ENCODE measurements at regions of chr6 and their contacts with region 1.

Region 1: DNA sequence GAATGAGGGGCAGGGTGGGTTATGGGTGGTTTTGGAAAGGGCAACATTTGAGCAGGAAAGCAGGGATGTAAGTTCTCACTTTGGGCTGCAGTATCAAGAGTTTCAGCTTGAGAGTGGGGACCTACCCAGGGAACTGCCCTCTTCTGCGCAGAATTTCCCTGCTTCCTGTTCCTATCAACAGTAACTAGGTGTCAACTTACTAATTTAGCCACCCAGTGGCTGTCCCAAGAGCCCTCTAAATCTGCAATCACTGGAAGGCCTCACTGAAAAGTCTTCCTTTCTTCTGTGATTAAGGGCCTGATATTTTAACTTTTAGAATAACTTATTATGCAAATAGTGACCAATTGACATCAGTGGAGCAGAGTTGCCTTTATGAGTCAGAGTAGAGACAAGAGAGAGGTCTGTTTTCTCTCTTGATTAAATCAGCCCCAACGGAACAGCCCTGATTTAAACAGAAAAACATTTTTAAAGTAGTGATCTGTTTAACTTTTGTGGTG is 118.2 kb upstream of the RIPOR2 start:
- DNase-seq: no peak
- H3K4me3 Mint-ChIP-seq: no peak overlapping the region
- H3K27ac Mint-ChIP-seq: no peak overlapping the region
- H3K4me1 Mint-ChIP-seq: peaks cover 86% of the 10 kb centered on the region
- H3K27me3 Mint-ChIP-seq: no peaks in the 10 kb centered on the region

Region 2: DNA sequence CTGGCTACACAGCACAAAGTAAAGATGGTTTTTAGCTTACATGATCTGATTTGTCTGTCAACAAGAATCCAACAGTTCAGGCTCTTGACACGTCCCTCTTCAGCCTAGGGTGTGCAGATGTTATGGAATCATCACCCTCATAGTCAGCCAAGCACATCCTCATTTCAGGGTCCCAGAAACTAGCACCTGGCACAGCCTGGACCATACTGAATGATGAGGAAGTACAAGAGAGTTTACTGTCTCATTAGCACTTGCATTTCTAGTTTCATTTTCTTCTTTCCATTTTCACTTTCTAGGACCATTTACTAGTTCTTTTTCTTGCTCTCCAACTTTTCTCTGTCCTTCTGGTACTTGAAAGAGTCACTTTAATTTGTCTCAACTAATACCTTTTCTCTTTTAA is 124.7 kb before region 1 on chr6:
- CTCF ChIA-PET with region 1: no interaction called
- DNase-seq: peak; percentile 49
- H3K4me3 Mint-ChIP-seq: peak overlapping the region; percentile 98
- H3K27ac Mint-ChIP-seq: peak overlapping the region; percentile 99
- H3K4me1 Mint-ChIP-seq: peaks cover 59% of the 10 kb centered on the region
- H3K27me3 Mint-ChIP-seq: no peaks in the 10 kb centered on the region

Region 3: DNA sequence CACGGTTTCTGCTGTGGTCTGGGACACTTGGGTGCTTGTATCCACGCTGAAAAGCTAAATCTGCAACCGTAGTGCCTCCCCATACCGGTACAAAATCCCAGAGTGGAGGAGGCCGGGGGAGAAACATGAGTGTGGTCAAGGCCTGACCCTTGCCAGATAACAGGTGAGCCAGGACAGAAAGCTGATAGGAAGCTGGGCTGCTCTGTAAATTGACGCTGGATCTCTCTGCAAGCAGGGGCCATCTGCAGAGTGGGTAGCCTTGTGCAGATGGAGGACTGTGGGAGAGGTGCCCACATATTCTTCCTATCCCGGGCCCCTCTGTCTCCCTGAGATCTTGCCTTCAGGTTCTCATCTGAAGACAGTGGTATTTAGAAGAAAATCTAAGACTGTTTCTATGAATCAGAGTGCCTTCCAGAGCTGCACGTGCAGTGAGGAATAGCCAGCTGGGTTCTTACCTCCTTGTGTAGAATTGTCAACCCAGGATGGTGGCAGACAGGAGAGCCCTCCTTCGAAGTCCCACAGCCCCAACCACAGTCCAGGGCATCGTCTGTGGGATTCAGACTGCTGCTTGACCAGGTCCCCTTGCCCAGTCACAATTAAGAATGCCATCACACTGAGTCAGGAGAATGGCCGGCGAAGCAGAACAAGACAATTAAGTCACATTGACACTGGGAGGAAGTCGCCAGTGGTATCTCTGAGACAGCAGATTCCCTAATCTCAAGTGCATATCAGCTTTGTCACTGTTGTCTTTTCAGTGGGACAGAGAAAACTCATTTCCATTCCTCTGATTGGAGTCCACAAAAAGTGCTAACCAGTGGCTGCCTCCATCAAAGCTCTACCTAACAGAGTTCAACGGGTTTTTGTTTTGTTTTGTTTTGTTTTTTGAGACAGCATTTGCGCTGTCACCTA is 18.1 kb before region 1 on chr6:
- CTCF ChIA-PET with region 1: interaction called, 10 read pairs
- DNase-seq: peak; percentile 31
- H3K4me3 Mint-ChIP-seq: peak overlapping the region; percentile 77
- H3K27ac Mint-ChIP-seq: peak overlapping the region; percentile 87
- H3K4me1 Mint-ChIP-seq: peaks cover 75% of the 10 kb centered on the region
- H3K27me3 Mint-ChIP-seq: no peaks in the 10 kb centered on the region

Region 4: DNA sequence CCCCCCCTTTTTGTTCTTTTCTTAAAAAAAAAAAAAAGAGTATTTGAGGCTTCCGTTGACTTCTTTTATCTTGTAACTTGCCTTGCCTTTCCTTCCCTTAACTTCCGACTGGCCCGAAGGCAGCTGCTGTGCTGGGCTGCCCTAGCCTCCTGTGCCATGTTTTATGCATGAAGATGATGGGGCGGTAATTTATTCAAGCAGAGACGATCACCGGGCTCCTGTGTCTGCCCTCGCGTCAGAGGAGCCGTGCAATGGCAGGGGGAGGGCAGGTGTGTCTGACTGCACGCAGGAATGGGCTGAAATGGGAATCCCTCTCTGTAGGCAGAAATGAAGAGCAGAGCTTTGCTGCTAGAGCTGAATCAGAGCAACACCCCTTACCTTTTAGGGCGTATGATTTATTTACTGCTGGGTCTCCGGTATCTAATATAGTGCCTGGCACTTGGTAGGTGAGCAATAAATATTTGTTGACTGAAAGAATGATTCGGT is 11.8 kb before region 1 on chr6:
- CTCF ChIA-PET with region 1: interaction called, 25 read pairs
- DNase-seq: peak; percentile 67
- H3K4me3 Mint-ChIP-seq: peak overlapping the region; percentile 93
- H3K27ac Mint-ChIP-seq: peak overlapping the region; percentile 95
- H3K4me1 Mint-ChIP-seq: peaks cover 62% of the 10 kb centered on the region
- H3K27me3 Mint-ChIP-seq: peaks cover 5% of the 10 kb centered on the region

Measured in activated naive CD4-positive, alpha-beta T cell treated with anti-CD3 and anti-CD28 coated beads, Interleukin-2, amount 10 ng/mL, durations not matched to agents 7 days and 5 days (primary cell).